Activated CD4-positive, alpha-beta memory T cell treated with anti-CD3 and anti-CD28 coated beads for 36 hours (primary cell): ENCODE measurements at regions of chr1 and their contacts with region 1.

Region 1: DNA sequence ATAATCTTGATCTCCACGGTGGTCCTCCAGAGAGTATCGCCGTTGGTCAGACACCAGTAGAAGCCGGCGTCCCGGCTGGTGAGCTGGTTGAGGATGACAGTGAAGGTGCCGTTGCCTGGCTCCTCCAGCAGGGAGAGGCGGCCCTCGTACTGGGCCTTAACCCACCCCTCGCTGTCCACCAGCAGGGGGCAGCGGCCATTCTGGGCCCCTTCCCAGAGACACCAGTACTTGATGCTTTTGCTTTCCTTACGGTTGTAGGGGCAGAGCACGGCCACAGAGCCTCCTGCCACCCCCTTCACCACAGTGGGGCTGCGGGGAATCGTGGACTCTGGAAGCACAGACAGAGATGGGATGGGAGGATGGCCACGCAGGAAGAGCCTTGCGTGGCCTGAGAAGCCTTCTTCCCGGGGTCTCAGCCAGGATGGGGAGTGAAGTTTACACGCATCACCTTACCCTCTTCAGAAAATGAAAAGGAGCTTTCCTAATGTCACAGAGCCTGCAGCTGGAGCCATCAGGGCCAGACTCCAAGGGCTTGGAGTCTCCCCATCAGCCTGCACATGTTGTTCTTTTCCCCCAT is 10.7 kb downstream of the PIGR start:
- DNase-seq: peak; percentile 71
- H3K4me3 Mint-ChIP-seq: no peak overlapping the region
- H3K27ac Mint-ChIP-seq: no peak overlapping the region
- H3K4me1 Mint-ChIP-seq: peaks cover 15% of the 10 kb centered on the region
- H3K27me3 Mint-ChIP-seq: no peaks in the 10 kb centered on the region

Region 2: DNA sequence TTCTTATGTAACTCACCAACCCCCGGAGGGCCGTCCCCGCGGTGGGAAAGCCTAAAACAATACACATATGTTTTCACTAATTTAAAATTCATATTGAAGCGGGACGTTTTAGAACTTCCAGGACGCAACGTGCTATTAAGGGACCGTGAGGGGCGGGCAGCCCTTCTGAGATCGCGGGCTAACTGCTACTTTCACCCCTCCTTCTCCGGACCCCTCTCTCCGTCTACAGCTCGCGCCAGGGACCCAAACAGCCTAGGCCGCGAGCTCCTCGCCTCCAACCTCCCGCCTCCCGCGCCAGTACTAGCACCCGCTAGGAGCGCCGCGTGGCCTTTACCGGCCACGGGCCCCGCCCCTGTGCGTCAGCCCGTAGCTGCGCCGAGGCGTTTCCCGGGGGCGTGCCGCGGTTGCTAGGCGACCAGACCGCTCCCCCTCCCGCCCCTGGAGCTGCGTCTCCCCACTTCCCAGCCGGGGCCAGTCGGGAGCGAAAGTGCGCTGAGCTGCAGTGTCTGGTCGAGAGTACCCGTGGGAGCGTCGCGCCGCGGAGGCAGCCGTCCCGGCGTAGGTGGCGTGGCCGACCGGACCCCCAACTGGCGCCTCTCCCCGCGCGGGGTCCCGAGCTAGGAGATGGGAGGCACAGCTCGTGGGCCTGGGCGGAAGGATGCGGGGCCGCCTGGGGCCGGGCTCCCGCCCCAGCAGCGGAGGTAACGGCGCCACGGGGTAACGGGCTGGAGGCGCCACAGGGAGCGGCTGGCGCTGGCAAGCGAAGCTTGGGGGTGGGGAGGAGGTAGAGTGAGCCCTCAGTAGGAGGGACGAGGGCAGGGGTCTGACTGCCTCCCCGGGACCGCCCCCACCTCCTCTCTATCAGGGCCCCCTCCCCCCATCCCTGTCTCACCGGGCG is 300.2 kb before region 1 on chr1 and contains the start of gene DYRK3:
- CTCF ChIA-PET with region 1: interaction called, 10 read pairs
- POLR2A ChIA-PET with region 1: no interaction called
- intact Hi-C with region 1: no loop called
- DNase-seq: peak; percentile 96
- H3K4me3 Mint-ChIP-seq: peak within 1 kb of the TSS; percentile 80
- H3K27ac Mint-ChIP-seq: peak within 1 kb of the TSS; percentile 80
- H3K4me1 Mint-ChIP-seq: peaks cover 25% of the 10 kb centered on the region
- H3K27me3 Mint-ChIP-seq: peaks cover 5% of the 10 kb centered on the region
- total RNA-seq, gene DYRK3: 10.1 to 11.4 TPM

Region 3: GRCh38 chr1:206878456-206878855 is 57.1 kb before region 1 on chr1:
- CTCF ChIA-PET with region 1: no interaction called
- POLR2A ChIA-PET with region 1: no interaction called
- intact Hi-C with region 1: no loop called
- DNase-seq: no peak
- H3K4me3 Mint-ChIP-seq: no peak overlapping the region
- H3K27ac Mint-ChIP-seq: no peak overlapping the region
- H3K4me1 Mint-ChIP-seq: peaks cover 17% of the 10 kb centered on the region
- H3K27me3 Mint-ChIP-seq: peaks cover 5% of the 10 kb centered on the region

Region 4: DNA sequence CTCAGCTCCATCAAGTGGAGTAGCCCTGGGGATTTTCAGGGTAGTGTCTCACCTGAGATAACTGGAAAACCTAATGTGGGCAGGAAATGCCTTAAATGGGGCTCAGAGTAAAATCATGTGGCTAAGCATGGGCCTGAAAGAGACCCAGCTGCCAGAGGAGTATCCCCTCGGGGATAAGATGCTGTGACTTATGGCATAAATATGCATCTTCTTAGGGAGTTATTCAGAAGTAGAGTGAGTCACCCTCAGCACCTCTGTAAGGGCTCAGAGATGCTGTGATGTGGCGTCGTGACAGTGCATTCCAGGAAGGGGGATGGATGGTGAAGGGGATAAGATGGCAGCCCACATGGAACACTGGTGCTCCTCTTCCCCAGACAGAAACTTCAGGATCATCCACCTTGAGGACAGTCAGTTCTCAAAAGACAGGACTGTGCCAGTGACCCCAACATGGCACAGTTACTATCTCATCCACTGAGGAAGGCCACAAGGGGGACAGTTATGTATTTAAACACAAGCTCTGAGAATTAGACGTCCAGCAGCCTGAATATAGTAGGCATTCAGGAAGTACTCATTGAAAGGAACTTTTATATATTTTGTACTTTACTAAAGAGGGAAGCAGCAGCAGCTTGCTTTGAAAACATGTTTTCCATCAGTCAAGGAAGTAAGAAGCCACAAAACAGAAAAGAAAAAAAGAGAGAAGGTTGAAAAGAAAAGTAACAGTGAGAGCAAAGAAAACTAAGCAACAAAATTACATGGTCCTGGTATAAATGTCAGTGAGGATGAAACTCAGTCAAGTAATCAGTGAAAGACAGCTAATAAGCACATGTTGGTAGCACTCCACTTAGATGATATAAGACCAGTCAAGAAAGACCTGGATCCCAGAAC is 30.1 kb before region 1 on chr1:
- CTCF ChIA-PET with region 1: interaction called, 17 read pairs
- POLR2A ChIA-PET with region 1: no interaction called
- intact Hi-C with region 1: no loop called
- DNase-seq: peak; percentile 74
- H3K4me3 Mint-ChIP-seq: peak overlapping the region; percentile 33
- H3K27ac Mint-ChIP-seq: peak overlapping the region; percentile 83
- H3K4me1 Mint-ChIP-seq: peaks cover 69% of the 10 kb centered on the region
- H3K27me3 Mint-ChIP-seq: no peaks in the 10 kb centered on the region

Region 5: DNA sequence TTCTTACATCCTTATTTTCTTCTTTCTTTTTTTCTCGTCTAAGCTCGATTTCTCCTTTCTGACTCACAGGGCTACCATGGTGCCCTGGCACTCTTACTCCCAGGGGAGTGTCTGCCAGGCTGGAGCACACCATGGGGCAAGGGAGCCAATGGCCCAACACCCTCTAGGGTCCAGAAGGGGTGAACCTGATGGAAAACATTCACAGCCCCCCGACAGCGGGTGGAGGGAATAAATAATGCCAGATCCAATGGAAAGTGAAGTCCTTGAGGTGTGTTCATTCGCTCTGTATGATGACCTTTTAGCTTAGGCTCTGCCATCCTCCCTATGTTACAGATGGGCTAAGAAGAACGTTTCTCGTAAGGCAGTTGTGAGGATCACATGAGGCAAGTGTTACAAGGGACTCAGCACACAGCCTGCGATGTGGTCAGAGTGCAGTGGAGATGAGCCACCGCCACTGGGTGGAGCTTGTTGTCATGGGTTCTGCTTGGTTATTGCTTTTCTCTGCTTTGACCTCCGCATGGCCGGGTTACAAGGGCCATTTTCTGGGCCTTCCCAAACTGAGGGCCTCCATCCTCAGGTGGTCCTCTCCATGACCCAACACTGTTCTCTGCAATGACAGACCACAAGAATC is 10.4 kb before region 1 on chr1:
- CTCF ChIA-PET with region 1: interaction called, 201 read pairs
- POLR2A ChIA-PET with region 1: interaction called, 6 read pairs
- intact Hi-C with region 1: no loop called
- DNase-seq: peak; percentile 82
- H3K4me3 Mint-ChIP-seq: no peak overlapping the region
- H3K27ac Mint-ChIP-seq: no peak overlapping the region
- H3K4me1 Mint-ChIP-seq: peaks cover 33% of the 10 kb centered on the region
- H3K27me3 Mint-ChIP-seq: no peaks in the 10 kb centered on the region

Region 6: GRCh38 chr1:207004981-207005830 is 69.6 kb after region 1 on chr1:
- CTCF ChIA-PET with region 1: interaction called, 16 read pairs
- POLR2A ChIA-PET with region 1: no interaction called
- intact Hi-C with region 1: no loop called
- DNase-seq: peak; percentile 51
- H3K4me3 Mint-ChIP-seq: no peak overlapping the region
- H3K27ac Mint-ChIP-seq: no peak overlapping the region
- H3K4me1 Mint-ChIP-seq: peaks cover 2% of the 10 kb centered on the region
- H3K27me3 Mint-ChIP-seq: peaks cover 7% of the 10 kb centered on the region

Region 7: GRCh38 chr1:207077470-207078377 is 142.1 kb after region 1 on chr1:
- CTCF ChIA-PET with region 1: interaction called, 5 read pairs
- POLR2A ChIA-PET with region 1: no interaction called
- intact Hi-C with region 1: loop called (anchors 5 kb)
- DNase-seq: peak; percentile 70
- H3K4me3 Mint-ChIP-seq: no peak overlapping the region
- H3K27ac Mint-ChIP-seq: no peak overlapping the region
- H3K4me1 Mint-ChIP-seq: peaks cover 2% of the 10 kb centered on the region
- H3K27me3 Mint-ChIP-seq: peaks cover 16% of the 10 kb centered on the region

Region 8: DNA sequence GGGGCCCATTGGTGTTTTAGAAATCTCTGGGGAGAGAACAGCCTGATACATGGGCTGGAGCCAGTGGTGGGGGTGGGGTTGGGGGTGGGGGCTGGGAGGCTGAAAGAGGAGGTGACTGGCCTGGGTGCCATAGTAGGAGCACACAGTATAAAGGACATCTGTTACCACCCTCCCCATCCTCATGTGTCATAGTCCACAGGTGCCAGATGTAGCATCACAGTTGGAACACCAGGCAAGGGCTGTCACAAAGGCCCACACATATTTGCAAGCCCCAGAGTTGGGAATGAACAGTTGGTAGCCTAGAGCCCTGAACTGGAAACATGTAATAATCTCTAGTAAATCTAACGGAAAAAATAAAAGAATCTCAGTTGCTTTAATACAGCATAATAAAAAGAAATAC is 463.4 kb after region 1 on chr1:
- CTCF ChIA-PET with region 1: no interaction called
- POLR2A ChIA-PET with region 1: no interaction called
- intact Hi-C with region 1: no loop called
- DNase-seq: no peak
- H3K4me3 Mint-ChIP-seq: no peak overlapping the region
- H3K27ac Mint-ChIP-seq: no peak overlapping the region
- H3K4me1 Mint-ChIP-seq: no peaks in the 10 kb centered on the region
- H3K27me3 Mint-ChIP-seq: no peaks in the 10 kb centered on the region